ENCODE measurements at regions of chr6 and their contacts with region 1.

Region 1: DNA sequence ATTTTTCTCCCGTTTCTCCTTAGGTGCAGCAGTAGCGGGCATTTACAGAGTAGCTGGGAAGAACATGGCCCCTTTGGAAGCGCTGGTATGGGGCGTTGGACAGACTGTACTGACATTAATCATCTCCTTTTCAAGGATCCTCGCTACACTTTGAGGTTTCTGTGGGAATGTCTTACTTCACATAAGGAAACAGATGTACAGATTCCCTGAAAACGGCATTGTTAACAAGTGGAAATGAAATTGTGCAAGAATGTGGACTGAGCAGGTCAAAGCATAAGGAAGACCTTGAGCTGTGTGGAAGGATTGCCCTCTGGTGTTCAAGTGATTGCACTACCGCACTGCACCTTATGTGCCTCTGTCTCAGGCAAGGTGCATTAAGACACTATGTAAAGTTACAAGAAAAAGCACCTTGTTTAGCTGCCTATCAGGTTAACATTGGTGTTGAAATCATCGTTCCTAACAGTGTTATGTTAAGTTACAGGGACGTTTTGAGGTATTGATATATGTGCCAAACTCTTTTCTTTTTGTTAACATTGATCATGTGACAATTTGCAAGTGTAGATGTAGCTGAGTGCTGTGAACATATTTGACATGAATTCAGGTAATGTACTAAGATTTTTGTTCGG is 38.0 kb downstream of the TMEM170B start:
- DNase-seq: peak; percentile 45
- CTCF ChIP-seq: peak; percentile 94

Region 2: GRCh38 chr6:10954590-10955010 is 620.9 kb before region 1 on chr6:
- CTCF ChIA-PET with region 1: interaction called, 20 read pairs
- POLR2A ChIA-PET with region 1: no interaction called
- DNase-seq: peak; percentile 72
- CTCF ChIP-seq: peak; percentile 94

Region 3: DNA sequence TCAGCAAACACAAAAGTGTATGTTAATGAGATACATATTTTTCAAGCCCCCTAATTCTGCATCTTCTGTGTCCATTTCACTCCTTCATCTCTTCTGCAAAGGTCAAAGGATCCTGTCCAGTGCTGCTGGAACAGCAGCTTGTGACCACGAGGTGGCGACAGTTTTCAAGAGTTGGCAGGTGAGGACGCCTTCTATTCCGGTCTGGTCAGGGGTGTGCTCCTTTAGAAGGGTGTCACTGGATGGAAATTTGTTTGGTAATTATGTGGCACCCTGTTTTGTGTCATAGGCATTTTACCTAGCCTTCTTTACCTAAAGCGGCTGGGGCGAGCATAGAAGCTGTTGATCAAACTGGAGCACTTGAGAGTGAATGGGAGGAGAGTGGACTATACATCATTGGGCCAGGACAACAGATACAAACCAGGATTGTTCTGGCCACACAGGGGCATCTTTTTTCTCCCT is 431.1 kb before region 1 on chr6:
- CTCF ChIA-PET with region 1: interaction called, 33 read pairs
- POLR2A ChIA-PET with region 1: no interaction called
- DNase-seq: peak; percentile 83
- CTCF ChIP-seq: peak; percentile 96

Region 4: GRCh38 chr6:11172501-11173332 is 402.8 kb before region 1 on chr6:
- CTCF ChIA-PET with region 1: interaction called, 13 read pairs
- POLR2A ChIA-PET with region 1: no interaction called
- DNase-seq: peak; percentile 68
- CTCF ChIP-seq: peak; percentile 69

Region 5: DNA sequence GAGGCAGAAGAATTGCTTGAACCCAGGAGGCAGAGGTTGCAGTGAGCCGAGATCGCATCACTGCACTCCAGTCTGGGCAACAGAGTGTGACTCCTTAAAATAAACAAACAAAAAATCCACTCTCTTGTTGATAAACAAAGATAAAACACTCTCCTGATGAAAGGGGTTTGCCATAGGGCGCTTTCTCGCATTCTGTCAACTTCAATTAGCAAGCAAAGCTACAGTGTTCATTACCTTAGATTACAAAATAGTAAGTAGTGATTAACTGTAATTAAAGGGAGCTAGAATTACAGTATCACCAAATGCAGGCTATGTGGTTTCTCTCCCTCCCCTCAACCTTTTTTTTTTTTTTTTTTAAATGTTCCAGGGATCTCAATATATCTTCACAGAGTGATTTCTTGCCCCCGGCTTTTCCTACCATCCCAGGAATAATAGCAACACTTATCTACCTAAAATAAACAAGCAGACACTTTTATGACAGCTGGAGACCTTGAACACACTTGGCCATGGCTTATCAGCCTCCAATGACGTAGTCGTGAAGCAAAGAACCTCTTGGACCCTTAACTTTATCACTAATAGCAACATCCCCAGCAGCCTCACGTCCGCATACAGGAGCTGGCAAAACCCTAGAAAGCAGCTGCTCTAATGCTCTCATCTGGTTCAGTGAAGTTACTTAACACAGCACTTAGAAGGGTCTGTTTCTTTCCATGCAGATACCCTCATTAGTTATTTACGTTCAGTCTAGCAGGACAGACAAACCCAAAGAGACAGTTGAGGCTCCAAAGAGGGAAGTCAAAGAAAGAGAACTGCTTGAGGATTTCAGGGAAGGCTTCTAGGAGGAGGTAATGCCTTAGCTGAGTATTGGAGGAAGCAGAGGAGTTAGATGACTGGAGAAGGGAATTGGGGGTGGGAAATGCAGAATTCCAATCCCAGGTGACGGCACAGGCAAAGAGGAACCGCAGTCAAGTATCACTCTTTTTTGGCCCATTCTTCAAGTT is 305.2 kb before region 1 on chr6:
- CTCF ChIA-PET with region 1: no interaction called
- POLR2A ChIA-PET with region 1: no interaction called
- DNase-seq: no peak
- CTCF ChIP-seq: no peak

Region 6: DNA sequence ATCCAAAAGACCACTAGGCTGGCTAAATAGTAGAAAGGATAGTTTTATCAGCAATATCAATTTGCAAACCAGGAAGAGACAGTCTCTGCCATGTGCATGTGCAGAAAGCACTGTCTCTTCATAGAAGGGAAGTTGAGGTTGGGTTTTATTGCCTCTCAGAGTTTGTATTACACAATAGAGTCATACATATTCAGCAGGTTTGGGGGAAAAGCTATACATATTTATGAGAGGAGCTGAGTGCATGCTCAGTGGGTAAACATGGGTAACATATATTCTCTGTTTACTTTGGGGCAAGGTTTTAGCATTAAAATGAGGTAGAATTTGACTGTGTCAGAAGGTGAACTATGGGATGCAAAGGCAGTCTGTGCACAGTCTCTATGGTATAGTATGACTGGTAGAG is 23.1 kb before region 1 on chr6:
- CTCF ChIA-PET with region 1: interaction called, 18 read pairs
- POLR2A ChIA-PET with region 1: no interaction called
- DNase-seq: no peak
- CTCF ChIP-seq: no peak

Region 7: GRCh38 chr6:11563793-11564192 is 11.7 kb before region 1 on chr6:
- CTCF ChIA-PET with region 1: interaction called, 29 read pairs
- POLR2A ChIA-PET with region 1: no interaction called
- DNase-seq: no peak
- CTCF ChIP-seq: no peak

Region 8: GRCh38 chr6:11585426-11586016 is 10.0 kb after region 1 on chr6:
- CTCF ChIA-PET with region 1: interaction called, 25 read pairs
- POLR2A ChIA-PET with region 1: no interaction called
- DNase-seq: peak; percentile 52
- CTCF ChIP-seq: peak; percentile 57

Measured in GM10248 (cell line).